Caco-2 (cell line): ENCODE measurements at regions of chr22 and their contacts with region 1.

Region 1: DNA sequence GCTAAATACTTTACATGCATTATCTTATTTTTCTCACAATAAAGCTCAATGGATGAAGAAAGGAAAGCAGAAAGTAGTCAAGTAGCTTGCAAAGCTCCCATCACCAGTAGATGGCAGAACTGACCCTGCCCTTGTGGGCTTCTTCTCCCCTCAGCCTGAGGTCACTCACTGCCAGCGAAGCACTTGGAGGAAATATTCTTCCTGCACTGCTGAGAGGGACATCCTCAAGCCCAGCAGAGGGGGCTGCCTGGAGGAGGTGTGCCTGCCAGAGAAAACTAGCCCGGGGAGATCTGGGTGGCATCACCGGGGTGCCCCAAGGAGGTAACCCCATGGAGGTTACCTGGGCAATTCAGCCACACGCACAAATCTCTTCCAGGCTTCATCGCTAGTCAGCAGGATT is 6.6 kb downstream of the APOL4 start:
- DNase-seq: peak; percentile 63 to 72
- H3K4me3 ChIP-seq: no peak overlapping the region
- H3K4me3 Mint-ChIP-seq: no peak overlapping the region
- H3K27ac Mint-ChIP-seq: no peak overlapping the region
- H3K4me1 ChIP-seq: no peaks in the 10 kb centered on the region
- H3K4me1 Mint-ChIP-seq: peaks cover 6% of the 10 kb centered on the region
- H3K27me3 ChIP-seq: no peaks in the 10 kb centered on the region; the same call in 1 of the 2 replicates
- H3K27me3 Mint-ChIP-seq: no peaks in the 10 kb centered on the region
- CTCF ChIP-seq: peak; percentile 67 to 78

Region 2: DNA sequence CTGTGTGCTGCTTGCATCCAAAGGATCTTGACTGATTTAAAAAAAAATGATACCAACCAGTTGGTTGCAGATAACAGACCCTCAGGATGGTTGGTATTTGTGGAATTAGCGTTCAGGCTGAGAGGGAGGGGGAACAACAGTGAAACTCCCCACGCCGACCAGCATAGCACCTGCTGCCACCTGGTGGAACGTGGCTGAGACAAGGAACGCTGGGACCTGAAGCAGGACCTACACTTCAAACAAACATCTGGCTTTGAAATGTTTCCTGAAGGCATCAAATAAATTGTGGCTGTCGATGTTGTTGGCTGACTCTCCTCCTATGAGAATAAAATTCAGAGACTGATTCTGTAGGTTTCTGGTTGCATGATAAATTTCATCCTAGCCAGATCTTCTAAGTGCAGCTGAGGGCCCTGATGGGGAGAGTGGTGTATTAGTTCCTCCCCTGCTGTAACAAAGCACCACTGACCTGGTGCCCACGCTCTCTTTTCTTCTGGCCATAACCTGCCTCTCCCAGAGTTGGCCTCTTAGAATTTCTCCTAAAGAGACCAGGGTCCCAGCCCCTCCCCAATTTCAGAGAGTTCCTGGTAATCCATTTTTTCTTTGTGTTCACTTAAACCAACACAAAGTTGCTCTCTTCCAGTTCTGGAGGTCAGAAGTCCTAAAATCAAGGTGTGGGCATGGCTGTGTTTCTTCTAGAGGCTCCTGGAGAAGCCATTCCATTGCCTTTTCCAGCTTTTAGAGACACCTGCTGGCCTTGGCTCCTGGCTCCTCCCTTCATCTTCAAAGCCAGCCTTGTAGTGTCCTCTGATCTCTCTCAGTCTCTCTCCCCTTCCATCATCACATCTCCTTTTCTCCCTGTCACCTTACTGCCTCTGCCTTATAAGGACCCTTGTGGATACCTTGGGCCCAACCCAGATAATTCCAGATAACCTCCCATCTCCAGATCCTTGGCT is 27.1 kb after region 1 on chr22:
- CTCF ChIA-PET with region 1: interaction called, 5 read pairs
- POLR2A ChIA-PET with region 1: no interaction called
- intact Hi-C with region 1: loop called (anchors 1 kb)
- DNase-seq: peak; percentile 53 to 68
- H3K4me3 ChIP-seq: no peak overlapping the region
- H3K4me3 Mint-ChIP-seq: no peak overlapping the region
- H3K27ac Mint-ChIP-seq: no peak overlapping the region
- H3K4me1 ChIP-seq: no peaks in the 10 kb centered on the region
- H3K4me1 Mint-ChIP-seq: peaks cover 24% of the 10 kb centered on the region
- H3K27me3 ChIP-seq: no peaks in the 10 kb centered on the region
- H3K27me3 Mint-ChIP-seq: peaks cover 6% of the 10 kb centered on the region
- CTCF ChIP-seq: peak; percentile 64 to 92

Region 3: GRCh38 chr22:36239401-36240171 is 44.6 kb after region 1 on chr22 and contains the start of gene APOL2:
- CTCF ChIA-PET with region 1: interaction called, 13 read pairs
- POLR2A ChIA-PET with region 1: no interaction called
- intact Hi-C with region 1: no loop called
- DNase-seq: peak; percentile 87 to 92
- H3K4me3 ChIP-seq: peak within 1 kb of the TSS; percentile 39
- H3K4me3 Mint-ChIP-seq: peak within 1 kb of the TSS; percentile 89
- H3K27ac Mint-ChIP-seq: peak within 1 kb of the TSS; percentile 86
- H3K4me1 ChIP-seq: no peaks in the 10 kb centered on the region
- H3K4me1 Mint-ChIP-seq: peaks cover 14% of the 10 kb centered on the region
- H3K27me3 ChIP-seq: no peaks in the 10 kb centered on the region
- H3K27me3 Mint-ChIP-seq: no peaks in the 10 kb centered on the region
- CTCF ChIP-seq: peak; percentile 46 to 71
- total RNA-seq, gene APOL2: 7.9 and 10.0 TPM in 2 replicates

Region 4: GRCh38 chr22:36277482-36278291 is 82.7 kb after region 1 on chr22:
- CTCF ChIA-PET with region 1: no interaction called
- POLR2A ChIA-PET with region 1: no interaction called
- intact Hi-C with region 1: loop called (anchors 5 kb)
- DNase-seq: peak; percentile 60 to 64
- H3K4me3 ChIP-seq: no peak overlapping the region
- H3K4me3 Mint-ChIP-seq: peak overlapping the region; percentile 29
- H3K27ac Mint-ChIP-seq: peak overlapping the region; percentile 51
- H3K4me1 ChIP-seq: no peaks in the 10 kb centered on the region
- H3K4me1 Mint-ChIP-seq: peaks cover 6% of the 10 kb centered on the region
- H3K27me3 ChIP-seq: no peaks in the 10 kb centered on the region
- H3K27me3 Mint-ChIP-seq: no peaks in the 10 kb centered on the region
- CTCF ChIP-seq: peak; percentile 73 to 76

Region 5: DNA sequence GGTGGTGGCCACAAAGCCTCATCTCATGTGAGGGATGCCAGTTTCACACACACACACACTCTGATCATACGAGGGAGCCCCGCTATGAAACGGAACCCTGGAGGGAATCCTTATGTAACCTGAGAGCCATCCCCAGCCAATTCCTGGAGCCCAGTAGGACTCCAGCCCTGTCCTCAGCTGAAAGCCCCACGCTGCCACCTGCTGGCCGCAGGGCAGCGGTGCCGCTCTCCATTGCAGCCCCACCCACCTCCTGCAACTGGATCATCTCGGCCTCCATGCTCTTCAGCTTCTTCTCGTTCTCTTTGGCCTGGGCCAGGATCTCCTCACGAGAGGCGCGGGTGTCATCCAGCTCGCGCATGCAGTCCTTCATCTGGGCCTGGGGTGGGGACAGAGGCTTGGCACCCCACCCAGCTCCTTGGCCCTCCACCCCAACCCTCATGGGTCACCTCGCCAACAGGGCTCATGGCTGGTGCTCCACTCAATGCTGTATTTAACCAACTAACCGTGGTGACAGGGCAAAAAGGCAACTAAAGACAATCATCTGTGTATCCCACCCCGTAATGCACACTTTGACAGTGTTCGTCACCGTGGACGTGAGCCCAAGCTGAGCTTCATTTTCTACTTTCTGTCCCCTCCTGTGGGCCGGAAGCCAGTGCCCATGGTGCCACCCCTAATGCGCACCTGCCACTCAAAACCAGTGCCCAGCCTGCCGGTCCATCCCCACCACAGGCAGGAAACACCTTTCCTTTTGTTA is 91.7 kb after region 1 on chr22:
- CTCF ChIA-PET with region 1: interaction called, 4 read pairs
- POLR2A ChIA-PET with region 1: no interaction called
- intact Hi-C with region 1: loop called (anchors 1 kb)
- DNase-seq: peak; percentile 77 to 86
- H3K4me3 ChIP-seq: no peak overlapping the region
- H3K4me3 Mint-ChIP-seq: no peak overlapping the region
- H3K27ac Mint-ChIP-seq: peak overlapping the region; percentile 35
- H3K4me1 ChIP-seq: no peaks in the 10 kb centered on the region
- H3K4me1 Mint-ChIP-seq: peaks cover 5% of the 10 kb centered on the region
- H3K27me3 ChIP-seq: no peaks in the 10 kb centered on the region
- H3K27me3 Mint-ChIP-seq: no peaks in the 10 kb centered on the region
- CTCF ChIP-seq: peak; percentile 87 to 93